ENCODE measurements at regions of chr17 and their contacts with region 1.

Region 1: GRCh38 chr17:41966463-41967140 is at the start of gene CNP:
- DNase-seq: peak; percentile 97
- CTCF ChIP-seq: no peak

Region 2: DNA sequence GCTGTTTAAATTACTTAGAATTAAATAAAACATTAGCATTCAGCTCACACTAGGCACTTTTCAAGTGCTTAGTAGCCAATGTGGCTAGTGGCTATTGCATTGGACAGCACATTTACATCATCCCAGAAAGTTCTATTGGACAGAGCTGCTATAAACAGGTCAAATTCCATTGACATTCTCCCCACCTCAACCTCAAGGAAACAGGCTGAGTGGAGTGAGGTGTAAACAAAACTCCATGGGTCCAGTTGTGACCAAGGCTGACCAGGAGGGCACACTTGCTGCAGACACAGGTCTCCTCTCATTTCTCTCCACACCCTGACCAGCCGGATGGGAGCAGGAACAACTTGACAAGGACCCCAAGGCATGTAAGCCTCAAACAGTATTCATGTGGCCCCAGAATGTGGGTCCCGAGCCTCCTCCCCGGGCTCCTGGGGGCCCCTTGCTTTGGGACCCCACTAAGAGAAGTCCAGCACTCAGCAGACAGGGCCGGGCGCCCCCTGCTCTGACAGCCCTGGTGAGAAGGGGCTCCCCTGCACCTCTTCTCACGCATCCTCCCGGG is 83.3 kb after region 1 on chr17:
- CTCF ChIA-PET with region 1: no interaction called
- POLR2A ChIA-PET with region 1: no interaction called
- DNase-seq: no peak
- CTCF ChIP-seq: no peak

Region 3: GRCh38 chr17:42120770-42121769 is 154.5 kb after region 1 on chr17 and contains the start of gene KAT2A:
- CTCF ChIA-PET with region 1: interaction called, 172 read pairs
- POLR2A ChIA-PET with region 1: no interaction called
- DNase-seq: peak; percentile 94
- CTCF ChIP-seq: no peak

Measured in GM10248 (cell line).